Breast epithelium (tissue), 4 donors: ENCODE measurements at regions of chr5 and their contacts with region 1.

Region 1: GRCh38 chr5:149567226-149567625 is 14.1 kb upstream of the ARHGEF37 start:
- DNase-seq: no peak
- H3K4me3 ChIP-seq: no peak overlapping the region
- H3K27ac ChIP-seq: no peak overlapping the region
- H3K4me1 ChIP-seq: peaks cover 0 to 8% of the 10 kb centered on the region in 2 donors
- H3K27me3 ChIP-seq: no peaks in the 10 kb centered on the region
- CTCF ChIP-seq: no peak
- POLR2A ChIP-seq: no peak

Region 2: DNA sequence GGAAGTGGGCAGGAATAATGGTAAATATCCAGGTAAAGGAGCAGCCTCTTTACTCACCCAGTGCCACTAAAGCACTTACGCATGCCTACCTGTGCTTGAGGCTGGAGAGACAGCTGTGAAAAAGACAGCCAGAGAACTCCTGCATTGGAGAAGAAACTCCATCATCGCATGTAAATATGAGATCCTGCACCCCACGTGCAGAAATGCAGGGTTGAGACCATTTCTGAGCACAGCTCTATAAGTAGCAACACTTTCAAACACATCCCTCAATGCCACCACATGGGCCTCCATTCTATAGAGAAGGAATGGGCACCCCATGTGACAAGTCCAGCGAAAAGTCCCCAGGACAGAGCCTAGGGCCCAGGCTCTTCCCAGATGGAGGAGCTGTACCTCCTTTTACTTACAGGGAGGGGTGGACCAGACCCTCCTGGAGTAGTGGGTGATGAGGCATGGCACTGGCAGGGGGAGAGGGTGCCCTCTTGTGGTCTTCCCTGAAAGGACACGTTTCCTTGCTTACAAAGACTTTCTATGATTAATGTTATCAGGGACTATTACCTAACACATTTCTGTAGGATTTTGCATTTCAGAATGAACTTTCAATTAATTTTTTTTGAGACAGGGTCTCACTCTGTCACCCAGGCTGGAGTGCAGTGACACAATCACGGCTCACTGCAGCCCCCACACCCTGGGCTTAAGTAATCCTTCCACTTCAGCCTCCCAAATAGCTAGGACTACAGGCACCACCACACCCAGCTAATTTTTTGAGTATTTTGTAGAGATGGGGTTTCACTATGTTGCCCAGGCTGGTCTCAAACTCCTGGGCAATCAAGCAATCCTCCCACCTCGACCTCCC is 132.8 kb before region 1 on chr5:
- intact Hi-C with region 1: no loop called
- DNase-seq: no peak
- H3K4me3 ChIP-seq: no peak overlapping the region
- H3K27ac ChIP-seq: peak overlapping the region; percentile 33 to 50
- H3K4me1 ChIP-seq: no peaks in the 10 kb centered on the region
- H3K27me3 ChIP-seq: no peaks in the 10 kb centered on the region
- CTCF ChIP-seq: peak; percentile 75 to 77 (median 76)
- POLR2A ChIP-seq: no peak

Region 3: GRCh38 chr5:149611326-149611725 is 44.1 kb after region 1 on chr5:
- intact Hi-C with region 1: loop called (anchors 2 kb)
- DNase-seq: no peak
- H3K4me3 ChIP-seq: no peak overlapping the region
- H3K27ac ChIP-seq: peak overlapping the region; percentile 8 to 9
- H3K4me1 ChIP-seq: no peaks in the 10 kb centered on the region
- H3K27me3 ChIP-seq: no peaks in the 10 kb centered on the region
- CTCF ChIP-seq: no peak
- POLR2A ChIP-seq: no peak